Activated naive CD4-positive, alpha-beta T cell treated with anti-CD3 and anti-CD28 coated beads for 36 hours (primary cell): ENCODE measurements at regions of chrX and their contacts with region 1.

Region 1: GRCh38 chrX:38754102-38754790 is 47.0 kb upstream of the MID1IP1 start:
- DNase-seq: peak; percentile 49
- H3K4me3 Mint-ChIP-seq: no peak overlapping the region
- H3K27ac Mint-ChIP-seq: no peak overlapping the region
- H3K4me1 Mint-ChIP-seq: no peaks in the 10 kb centered on the region
- H3K27me3 Mint-ChIP-seq: no peaks in the 10 kb centered on the region

Region 2: DNA sequence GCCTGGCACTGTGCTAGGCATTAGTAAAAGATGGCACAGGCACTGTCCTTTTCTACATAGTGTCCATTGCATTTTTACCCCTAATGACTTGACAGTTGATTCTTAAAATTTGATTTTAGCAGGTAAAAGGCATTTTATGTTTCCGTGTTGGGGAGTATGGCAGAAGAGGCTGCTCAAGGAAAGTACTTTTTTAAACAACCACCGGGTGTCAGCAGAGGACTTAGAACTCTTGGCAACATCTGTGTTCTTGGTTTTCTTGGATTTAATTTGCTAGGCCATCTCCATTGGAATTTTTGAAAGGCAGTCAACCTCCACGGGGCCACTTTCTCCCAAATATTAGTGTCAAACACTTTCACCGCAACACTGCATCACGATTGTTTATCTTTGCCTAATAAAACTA is 90.0 kb before region 1 on chrX:
- CTCF ChIA-PET with region 1: interaction called, 4 read pairs
- intact Hi-C with region 1: loop called (anchors 5 kb)
- DNase-seq: peak; percentile 18
- H3K4me3 Mint-ChIP-seq: no peak overlapping the region
- H3K27ac Mint-ChIP-seq: no peak overlapping the region
- H3K4me1 Mint-ChIP-seq: no peaks in the 10 kb centered on the region
- H3K27me3 Mint-ChIP-seq: no peaks in the 10 kb centered on the region

Region 3: DNA sequence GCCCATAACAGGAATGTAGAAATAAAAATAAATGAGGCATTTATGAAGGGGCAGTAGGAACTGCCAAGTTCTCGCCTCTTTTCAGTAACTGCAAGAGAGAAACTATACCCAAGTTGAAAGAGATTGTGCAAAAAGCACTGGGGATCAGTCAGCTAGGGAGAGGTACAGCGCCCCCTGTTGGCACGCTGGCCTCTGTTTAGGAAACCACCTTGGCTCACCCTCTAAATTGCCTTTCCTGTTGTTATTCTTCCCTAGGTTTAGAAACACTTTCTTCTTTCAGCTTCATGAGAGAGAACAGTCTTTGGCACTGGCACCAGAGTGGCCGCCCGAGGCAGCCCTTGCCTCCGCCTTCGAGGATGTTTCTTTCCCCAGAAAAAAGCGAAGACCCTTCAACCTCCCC is 395.5 kb after region 1 on chrX:
- CTCF ChIA-PET with region 1: interaction called, 3 read pairs
- intact Hi-C with region 1: loop called (anchors 1 kb)
- DNase-seq: peak; percentile 76
- H3K4me3 Mint-ChIP-seq: no peak overlapping the region
- H3K27ac Mint-ChIP-seq: no peak overlapping the region
- H3K4me1 Mint-ChIP-seq: no peaks in the 10 kb centered on the region
- H3K27me3 Mint-ChIP-seq: no peaks in the 10 kb centered on the region

Region 4: DNA sequence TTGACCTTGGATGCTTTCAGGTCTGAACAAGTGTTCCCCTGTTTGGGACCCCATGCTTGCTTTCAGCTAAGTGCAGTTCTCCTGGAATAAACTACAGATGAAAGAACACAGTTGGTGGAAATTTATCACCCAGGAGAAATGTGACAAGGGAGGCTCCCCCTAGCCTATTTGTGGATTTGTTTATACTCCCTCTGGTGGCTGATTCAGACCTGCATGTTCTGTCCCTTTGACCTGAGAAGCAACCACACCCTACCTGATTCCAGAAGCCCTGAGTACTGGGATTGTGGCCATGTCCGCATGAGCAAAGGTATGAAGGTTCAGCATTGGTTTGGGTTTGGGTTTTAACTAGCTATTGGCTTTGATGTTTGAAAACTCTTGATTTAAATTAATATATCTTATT is 487.9 kb after region 1 on chrX:
- CTCF ChIA-PET with region 1: no interaction called
- intact Hi-C with region 1: loop called (anchors 5 kb)
- DNase-seq: peak; percentile 17
- H3K4me3 Mint-ChIP-seq: no peak overlapping the region
- H3K27ac Mint-ChIP-seq: no peak overlapping the region
- H3K4me1 Mint-ChIP-seq: peaks cover 24% of the 10 kb centered on the region
- H3K27me3 Mint-ChIP-seq: no peaks in the 10 kb centered on the region